Dendritic cell treated with granulocyte-macrophage colony-stimulating factor and Interleukin-4, amounts not matched to agents 40 ng/mL and 50 ng/mL, for 4 days (primary cell): ENCODE measurements at regions of chr4 and their contacts with region 1.

Region 1: DNA sequence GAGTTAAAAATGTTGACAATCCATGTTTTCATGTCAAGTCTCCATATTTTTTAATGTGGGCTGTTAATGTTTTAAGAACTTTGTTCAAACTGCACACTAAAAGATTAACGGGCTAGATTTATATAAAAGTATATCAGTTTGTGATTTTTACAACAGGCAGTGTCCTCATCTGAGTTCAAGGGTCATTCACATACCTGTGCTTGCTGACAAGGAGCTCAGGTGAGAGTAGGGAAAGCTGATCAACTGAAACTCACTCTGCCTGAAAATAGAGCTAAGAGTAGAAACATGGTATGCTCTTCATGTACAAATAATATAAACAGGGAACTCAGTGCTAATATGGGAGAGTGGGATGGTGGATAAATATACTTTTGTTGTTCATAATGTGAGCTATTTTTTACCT is 102.3 kb upstream of the DKK2 start:
- H3K4me3 Mint-ChIP-seq: no peak overlapping the region
- H3K27ac Mint-ChIP-seq: no peak overlapping the region
- H3K4me1 Mint-ChIP-seq: no peaks in the 10 kb centered on the region
- H3K27me3 Mint-ChIP-seq: no peaks in the 10 kb centered on the region

Region 2: DNA sequence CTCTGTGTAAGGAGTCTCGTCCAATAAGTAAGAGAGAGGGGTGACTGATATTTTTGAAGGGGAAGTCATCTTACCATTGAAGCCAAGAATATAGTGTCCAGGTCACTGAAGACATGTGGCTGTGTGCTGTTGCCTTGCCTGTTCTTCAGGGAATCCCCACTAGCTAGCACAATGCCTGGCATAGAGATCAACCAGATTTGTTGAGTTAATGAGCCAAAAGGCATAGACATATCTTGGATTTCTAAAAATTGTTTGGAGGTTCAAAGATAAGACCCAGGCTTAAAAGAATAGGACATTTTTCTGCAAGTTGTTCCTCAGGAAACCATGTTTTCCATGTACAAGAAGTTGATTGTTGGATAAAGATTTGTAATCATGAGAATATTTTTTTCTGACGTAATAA is 16.9 kb after region 1 on chr4:
- intact Hi-C with region 1: loop called (anchors 1 kb)
- H3K4me3 Mint-ChIP-seq: no peak overlapping the region
- H3K27ac Mint-ChIP-seq: no peak overlapping the region
- H3K4me1 Mint-ChIP-seq: no peaks in the 10 kb centered on the region
- H3K27me3 Mint-ChIP-seq: no peaks in the 10 kb centered on the region

Region 3: GRCh38 chr4:107248571-107248970 is 110.1 kb after region 1 on chr4:
- intact Hi-C with region 1: no loop called
- H3K4me3 Mint-ChIP-seq: no peak overlapping the region
- H3K27ac Mint-ChIP-seq: no peak overlapping the region
- H3K4me1 Mint-ChIP-seq: no peaks in the 10 kb centered on the region
- H3K27me3 Mint-ChIP-seq: no peaks in the 10 kb centered on the region